AG04450 (cell line): ENCODE measurements at regions of chr2 and their contacts with region 1.

Region 1: DNA sequence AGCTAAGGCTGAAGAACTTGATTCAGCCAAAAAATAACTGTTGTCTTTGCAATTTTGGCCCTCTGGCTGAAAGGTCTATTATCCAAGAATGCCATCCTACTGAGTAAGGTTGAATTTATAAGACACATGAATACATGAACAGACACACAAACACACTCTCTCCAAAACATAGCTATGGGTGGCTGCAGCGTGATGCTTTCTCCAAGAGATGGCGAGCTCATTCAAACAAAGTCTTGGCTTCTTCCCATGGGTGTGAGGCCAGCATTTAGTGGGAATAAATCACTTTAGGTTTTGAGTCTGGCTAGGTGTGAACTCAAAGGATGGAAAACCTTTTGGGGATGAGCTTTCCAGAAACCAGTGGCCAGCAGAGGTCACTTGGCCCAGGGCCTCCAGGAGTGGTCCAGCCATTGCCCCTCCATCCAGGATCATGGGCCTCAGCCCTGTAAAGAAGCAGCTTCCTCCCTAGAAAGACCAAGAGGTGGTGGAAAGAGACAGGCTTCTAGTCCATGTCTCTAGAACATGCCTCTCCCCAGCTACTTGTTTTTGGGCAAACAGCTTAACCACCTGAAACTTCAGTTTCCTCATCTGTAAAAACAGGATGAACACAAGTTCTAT is 11.0 kb upstream of the OSR1 start:
- DNase-seq: no peak
- H3K4me3 ChIP-seq: no peak overlapping the region
- H3K27ac ChIP-seq: no peak overlapping the region
- H3K27me3 ChIP-seq: peaks cover 29% of the 10 kb centered on the region
- CTCF ChIP-seq: peak; percentile 63

Region 2: GRCh38 chr2:19299522-19299921 is 69.9 kb before region 1 on chr2:
- CTCF ChIA-PET with region 1: no interaction called
- POLR2A ChIA-PET with region 1: no interaction called
- DNase-seq: no peak
- H3K4me3 ChIP-seq: no peak overlapping the region
- H3K27ac ChIP-seq: no peak overlapping the region
- H3K27me3 ChIP-seq: no peaks in the 10 kb centered on the region
- CTCF ChIP-seq: no peak

Region 3: GRCh38 chr2:19545507-19545906 is 176.1 kb after region 1 on chr2:
- CTCF ChIA-PET with region 1: no interaction called
- POLR2A ChIA-PET with region 1: no interaction called
- DNase-seq: no peak
- H3K4me3 ChIP-seq: no peak overlapping the region
- H3K27ac ChIP-seq: no peak overlapping the region
- H3K27me3 ChIP-seq: peaks cover 6% of the 10 kb centered on the region
- CTCF ChIP-seq: no peak

Region 4: DNA sequence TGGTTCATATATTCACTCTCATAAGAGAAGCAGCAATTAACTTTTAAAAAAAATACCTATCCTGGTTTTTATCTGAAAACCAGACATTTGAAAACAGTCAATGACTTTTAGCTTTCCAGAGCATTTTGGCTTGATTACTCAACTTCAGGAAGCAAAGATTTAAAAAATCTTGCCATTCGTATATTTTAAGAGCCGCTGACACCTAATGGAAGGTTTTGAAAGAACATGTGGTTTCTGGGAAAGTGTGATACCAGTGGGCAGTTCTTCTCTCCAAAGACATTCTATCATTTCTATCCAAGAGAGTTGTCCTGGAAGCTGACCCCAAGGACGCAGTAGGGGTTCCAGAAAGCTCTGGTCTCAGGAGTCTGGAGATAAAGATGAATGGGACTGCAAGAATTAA is 297.6 kb after region 1 on chr2:
- CTCF ChIA-PET with region 1: interaction called, 29 read pairs
- POLR2A ChIA-PET with region 1: no interaction called
- DNase-seq: peak; percentile 7
- H3K4me3 ChIP-seq: no peak overlapping the region
- H3K27ac ChIP-seq: no peak overlapping the region
- H3K27me3 ChIP-seq: no peaks in the 10 kb centered on the region
- CTCF ChIP-seq: peak; percentile 56

Region 5: GRCh38 chr2:19863303-19864041 is 494.0 kb after region 1 on chr2:
- CTCF ChIA-PET with region 1: interaction called, 50 read pairs
- POLR2A ChIA-PET with region 1: no interaction called
- DNase-seq: no peak
- H3K4me3 ChIP-seq: no peak overlapping the region
- H3K27ac ChIP-seq: no peak overlapping the region
- H3K27me3 ChIP-seq: peaks cover 6% of the 10 kb centered on the region
- CTCF ChIP-seq: peak; percentile 82